ENCODE measurements at regions of chrX and their contacts with region 1.

Region 1: GRCh38 chrX:138128027-138128671 is 562.2 kb downstream of the ZIC3 start:
- DNase-seq: peak in 4 of 5 donors; percentile 6 to 21 (median 10)
- H3K4me3 ChIP-seq: no peak overlapping the region
- H3K4me3 Mint-ChIP-seq: no peak overlapping the region
- H3K27ac ChIP-seq: no peak overlapping the region
- H3K27ac Mint-ChIP-seq: no peak overlapping the region
- H3K4me1 ChIP-seq: no peaks in the 10 kb centered on the region
- H3K4me1 Mint-ChIP-seq: peaks cover 0 to 2% (median 0%) of the 10 kb centered on the region in 4 donors
- H3K27me3 ChIP-seq: no peaks in the 10 kb centered on the region
- H3K27me3 Mint-ChIP-seq: no peaks in the 10 kb centered on the region

Region 2: GRCh38 chrX:138745196-138745595 is 617.0 kb after region 1 on chrX:
- CTCF ChIA-PET with region 1: no interaction called
- POLR2A ChIA-PET with region 1: no interaction called
- intact Hi-C with region 1: loop called (anchors 10 kb)
- DNase-seq: peak in 4 of 5 donors; percentile 30 to 43 (median 39)
- H3K4me3 ChIP-seq: no peak overlapping the region
- H3K4me3 Mint-ChIP-seq: no peak overlapping the region
- H3K27ac ChIP-seq: no peak overlapping the region
- H3K27ac Mint-ChIP-seq: no peak overlapping the region
- H3K4me1 ChIP-seq: no peaks in the 10 kb centered on the region
- H3K4me1 Mint-ChIP-seq: no peaks in the 10 kb centered on the region
- H3K27me3 ChIP-seq: no peaks in the 10 kb centered on the region
- H3K27me3 Mint-ChIP-seq: peaks cover 0 to 1% of the 10 kb centered on the region in 2 donors

Measured in CD4-positive, alpha-beta memory T cell (primary cell).